ENCODE measurements at regions of chr6 and their contacts with region 1.

Region 1: GRCh38 chr6:42217519-42218367 is at the start of gene MRPS10:
- DNase-seq: peak; percentile 91 to 94
- ATAC-seq: peak; percentile 100
- H3K4me3 ChIP-seq: peak within 1 kb of the TSS; percentile 73 to 89 (median 84)
- H3K27ac ChIP-seq: peak within 1 kb of the TSS; percentile 81 to 90 (median 86)
- H3K4me1 ChIP-seq: peaks cover 22 to 25% of the 10 kb centered on the region in 2 donors
- H3K27me3 ChIP-seq: no peaks in the 10 kb centered on the region
- CTCF ChIP-seq: no peak
- POLR2A ChIP-seq: peak; percentile 41 to 76
- total RNA-seq, gene MRPS10: 52.2 to 63.7 (median 56.0) TPM

Region 2: GRCh38 chr6:42050266-42051032 is 167.3 kb before region 1 on chr6 and contains the start of gene TAF8:
- in situ Hi-C with region 1: no loop called
- intact Hi-C with region 1: loop called (anchors 1 kb)
- DNase-seq: peak; percentile 91
- ATAC-seq: peak; percentile 90 to 92
- H3K4me3 ChIP-seq: peak within 1 kb of the TSS; percentile 67 to 78 (median 71)
- H3K27ac ChIP-seq: peak within 1 kb of the TSS; percentile 89 to 94 (median 92)
- H3K4me1 ChIP-seq: peaks cover 16 to 29% of the 10 kb centered on the region in 2 donors
- H3K27me3 ChIP-seq: peaks cover 0 to 19% (median 0%) of the 10 kb centered on the region in 3 donors
- CTCF ChIP-seq: no peak
- POLR2A ChIP-seq: peak; percentile 75 to 82
- total RNA-seq, gene TAF8: 16.3 to 49.2 (median 35.6) TPM

Region 3: DNA sequence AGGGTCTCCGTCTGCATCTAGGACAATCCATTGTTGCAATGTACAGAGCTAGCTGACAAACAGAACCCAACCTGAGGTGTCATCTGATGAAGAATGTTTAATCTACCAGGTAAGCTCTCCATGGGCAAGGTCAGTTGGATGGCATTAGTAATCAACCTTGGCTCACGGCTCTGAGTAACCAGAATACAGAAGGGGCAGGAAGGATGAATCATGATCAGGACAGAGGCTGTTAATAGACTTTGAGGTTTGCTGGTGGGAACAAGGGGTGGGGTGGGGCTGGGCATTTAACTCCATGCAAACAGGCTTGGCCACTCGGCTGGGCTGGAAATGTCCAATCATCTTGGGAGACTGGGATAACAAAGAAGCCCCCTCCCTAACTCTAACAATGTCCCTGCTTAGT is 77.0 kb after region 1 on chr6:
- in situ Hi-C with region 1: no loop called
- intact Hi-C with region 1: no loop called
- DNase-seq: no peak
- ATAC-seq: no peak
- H3K4me3 ChIP-seq: no peak overlapping the region
- H3K27ac ChIP-seq: no peak overlapping the region
- H3K4me1 ChIP-seq: peaks cover 0 to 6% of the 10 kb centered on the region in 2 donors
- H3K27me3 ChIP-seq: no peaks in the 10 kb centered on the region
- CTCF ChIP-seq: no peak
- POLR2A ChIP-seq: no peak